Activated naive CD8-positive, alpha-beta T cell treated with anti-CD3 and anti-CD28 coated beads, Interleukin-2, amount 10 ng/mL, durations not matched to agents 7 days and 5 days (primary cell): ENCODE measurements at regions of chr7 and their contacts with region 1.

Region 1: GRCh38 chr7:44858161-44858560 is 10.3 kb upstream of the H2AZ2 start:
- DNase-seq: no peak
- ATAC-seq: no peak
- H3K4me3 Mint-ChIP-seq: no peak overlapping the region
- H3K27ac Mint-ChIP-seq: no peak overlapping the region
- H3K4me1 Mint-ChIP-seq: peaks cover 12% of the 10 kb centered on the region
- H3K27me3 Mint-ChIP-seq: peaks cover 13% of the 10 kb centered on the region

Region 2: DNA sequence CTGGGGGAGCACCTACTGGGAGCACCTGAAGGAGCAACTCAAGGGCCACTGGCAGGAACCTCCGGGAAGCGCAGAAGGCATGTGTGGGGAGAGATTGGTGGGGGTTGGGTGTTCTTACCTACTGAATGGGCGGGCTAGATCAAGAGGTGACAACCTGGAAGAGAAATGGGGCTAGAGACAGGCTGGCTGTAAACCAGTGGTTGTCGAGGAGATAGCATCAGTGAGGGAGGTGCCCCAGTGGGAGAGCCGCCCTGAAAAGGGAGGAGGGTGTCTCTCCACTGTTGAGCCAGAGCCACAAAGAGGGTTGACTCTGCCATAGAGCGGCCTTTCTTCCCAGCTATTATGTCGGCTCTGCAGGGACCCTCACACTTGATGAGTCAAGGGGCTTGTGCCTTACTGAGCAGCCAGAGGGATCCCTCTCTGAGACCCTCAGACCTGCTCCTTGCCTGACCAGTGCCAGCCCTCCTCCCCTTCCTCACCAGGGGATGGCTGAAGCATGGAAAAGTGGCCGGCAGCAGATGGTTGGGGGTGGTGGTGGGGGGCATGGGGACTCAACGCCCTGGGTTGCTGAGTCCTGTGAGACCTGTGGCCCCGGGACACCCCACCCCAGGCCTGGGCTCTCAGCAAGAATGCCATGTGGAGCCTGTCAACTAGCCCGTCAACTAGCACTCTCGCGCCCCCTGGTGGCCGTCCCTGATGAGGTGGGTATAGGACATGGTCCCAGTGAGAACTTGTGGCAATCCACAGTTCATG is 63.6 kb after region 1 on chr7:
- POLR2A ChIA-PET with region 1: interaction called, 12 read pairs
- DNase-seq: peak; percentile 97
- ATAC-seq: peak; percentile 99
- H3K4me3 Mint-ChIP-seq: no peak overlapping the region
- H3K27ac Mint-ChIP-seq: peak overlapping the region; percentile 72
- H3K4me1 Mint-ChIP-seq: peaks cover 24% of the 10 kb centered on the region
- H3K27me3 Mint-ChIP-seq: peaks cover 8% of the 10 kb centered on the region